ENCODE measurements at regions of chr6 and their contacts with region 1.

Region 1: GRCh38 chr6:150600301-150601017 is 774 bp downstream of the PLEKHG1 start:
- DNase-seq: peak; percentile 92
- H3K4me3 ChIP-seq: peak overlapping the region; percentile 78
- H3K27ac ChIP-seq: peak overlapping the region; percentile 69
- H3K4me1 ChIP-seq: peaks cover 44% of the 10 kb centered on the region
- CTCF ChIP-seq: peak; percentile 74

Region 2: DNA sequence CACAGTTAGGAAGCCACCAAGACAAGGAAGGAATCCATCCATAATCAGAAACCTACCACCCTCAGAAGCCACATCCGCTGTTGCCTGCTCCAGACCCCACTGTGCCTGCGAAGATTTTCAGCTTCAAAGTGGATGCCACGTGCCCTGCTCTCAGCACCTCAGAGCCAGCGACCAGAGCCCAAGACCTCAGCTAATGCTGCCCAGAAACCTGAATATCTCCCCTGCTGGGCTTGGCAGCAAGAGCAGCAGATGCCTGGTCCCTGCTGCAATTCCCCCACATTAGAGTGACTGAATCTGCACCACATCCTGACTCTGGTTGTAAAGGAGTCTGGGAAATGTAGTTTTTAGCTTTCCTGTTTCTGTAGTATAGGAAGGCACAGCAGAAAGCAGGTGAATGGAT is 520.9 kb before region 1 on chr6:
- CTCF ChIA-PET with region 1: no interaction called
- POLR2A ChIA-PET with region 1: no interaction called
- intact Hi-C with region 1: loop called (anchors 10 kb)
- DNase-seq: peak; percentile 24
- H3K4me3 ChIP-seq: no peak overlapping the region
- H3K27ac ChIP-seq: no peak overlapping the region
- H3K4me1 ChIP-seq: no peaks in the 10 kb centered on the region
- CTCF ChIP-seq: no peak

Region 3: GRCh38 chr6:150560004-150560883 is 40.2 kb before region 1 on chr6:
- CTCF ChIA-PET with region 1: no interaction called
- POLR2A ChIA-PET with region 1: no interaction called
- intact Hi-C with region 1: loop called (anchors 2 kb)
- DNase-seq: no peak
- H3K4me3 ChIP-seq: no peak overlapping the region
- H3K27ac ChIP-seq: no peak overlapping the region
- H3K4me1 ChIP-seq: no peaks in the 10 kb centered on the region
- CTCF ChIP-seq: no peak

Region 4: DNA sequence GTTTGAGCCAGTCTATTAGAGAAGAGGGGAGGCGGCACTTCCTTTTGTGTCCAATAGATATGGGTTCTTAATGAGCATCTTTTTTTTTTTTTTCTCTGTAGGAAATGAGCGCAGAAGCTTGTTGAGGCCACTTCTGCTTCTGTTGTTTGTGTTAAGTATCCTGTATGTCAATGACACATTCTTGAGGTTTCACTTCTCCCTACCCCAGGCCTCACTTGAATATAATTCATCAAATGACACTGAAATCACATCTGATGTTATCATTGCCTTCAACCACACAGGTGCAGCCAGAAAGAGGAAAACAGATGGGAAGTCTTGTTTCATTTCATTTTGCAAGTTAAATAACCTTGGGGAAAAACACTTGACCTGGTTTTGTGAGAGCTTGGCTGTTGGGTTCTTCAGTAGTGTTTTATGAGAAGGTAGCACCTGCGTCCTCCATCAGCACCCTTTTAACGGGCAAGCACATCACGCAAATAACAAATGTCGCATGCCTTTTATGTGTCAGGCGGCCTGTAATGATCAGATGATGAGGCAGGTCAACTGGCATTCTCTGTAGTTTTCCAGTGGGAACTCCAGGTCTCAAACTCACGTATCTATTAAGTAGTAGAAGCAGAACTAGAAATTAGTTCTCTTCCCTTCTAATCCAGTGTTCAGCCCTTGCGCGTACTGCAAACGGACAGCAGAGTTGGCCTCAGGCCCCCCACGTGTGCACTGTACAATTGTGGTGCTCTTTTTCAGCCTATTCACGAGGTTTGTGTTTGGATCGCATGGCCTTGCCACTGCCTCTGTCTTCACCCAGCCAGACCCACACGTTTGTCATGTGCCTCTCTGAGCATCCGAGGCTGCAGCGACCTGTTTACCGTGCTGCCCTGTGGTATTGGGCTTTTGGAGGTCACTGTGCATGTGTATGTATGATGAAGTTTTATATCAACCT is 22.7 kb after region 1 on chr6:
- CTCF ChIA-PET with region 1: interaction called, 4 read pairs
- POLR2A ChIA-PET with region 1: interaction called, 18 read pairs
- intact Hi-C with region 1: loop called (anchors 1 kb)
- DNase-seq: peak; percentile 99
- H3K4me3 ChIP-seq: peak overlapping the region; percentile 57
- H3K27ac ChIP-seq: peak overlapping the region; percentile 99
- H3K4me1 ChIP-seq: peaks cover 94% of the 10 kb centered on the region
- CTCF ChIP-seq: no peak

Region 5: GRCh38 chr6:150685860-150686259 is 85.4 kb after region 1 on chr6:
- CTCF ChIA-PET with region 1: interaction called, 5 read pairs
- POLR2A ChIA-PET with region 1: interaction called, 3 read pairs
- intact Hi-C with region 1: loop called (anchors 1 kb)
- DNase-seq: peak; percentile 80
- H3K4me3 ChIP-seq: no peak overlapping the region
- H3K27ac ChIP-seq: no peak overlapping the region
- H3K4me1 ChIP-seq: peaks cover 66% of the 10 kb centered on the region
- CTCF ChIP-seq: peak; percentile 99

Region 6: GRCh38 chr6:150767571-150768018 is 167.1 kb after region 1 on chr6:
- CTCF ChIA-PET with region 1: no interaction called
- POLR2A ChIA-PET with region 1: interaction called, 5 read pairs
- intact Hi-C with region 1: loop called (anchors 2 kb)
- DNase-seq: no peak
- H3K4me3 ChIP-seq: no peak overlapping the region
- H3K27ac ChIP-seq: no peak overlapping the region
- H3K4me1 ChIP-seq: peaks cover 45% of the 10 kb centered on the region
- CTCF ChIP-seq: no peak

Region 7: GRCh38 chr6:150797949-150798348 is 197.5 kb after region 1 on chr6:
- CTCF ChIA-PET with region 1: no interaction called
- POLR2A ChIA-PET with region 1: no interaction called
- intact Hi-C with region 1: no loop called
- DNase-seq: no peak
- H3K4me3 ChIP-seq: no peak overlapping the region
- H3K27ac ChIP-seq: no peak overlapping the region
- H3K4me1 ChIP-seq: no peaks in the 10 kb centered on the region
- CTCF ChIP-seq: no peak

Region 8: DNA sequence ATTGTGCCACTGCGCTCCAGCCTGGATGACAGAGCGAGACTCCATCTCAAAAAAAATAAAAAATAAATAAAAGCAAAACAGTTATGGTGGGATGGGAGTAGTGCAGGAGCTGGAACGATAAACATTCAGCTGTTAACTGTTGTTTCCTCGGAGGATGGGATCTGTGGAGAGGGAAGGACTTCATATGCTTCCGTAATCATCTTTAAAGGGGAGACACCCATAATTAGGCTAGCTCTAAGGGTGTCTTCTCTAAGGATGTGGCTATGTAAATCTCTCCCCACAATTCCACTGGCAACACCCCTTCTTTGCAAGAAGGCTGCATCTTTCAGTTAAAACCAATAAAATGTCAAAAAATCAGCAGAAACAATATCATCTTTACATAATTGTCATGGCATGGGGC is 222.5 kb after region 1 on chr6:
- CTCF ChIA-PET with region 1: interaction called, 11 read pairs
- POLR2A ChIA-PET with region 1: interaction called, 3 read pairs
- intact Hi-C with region 1: no loop called
- DNase-seq: no peak
- H3K4me3 ChIP-seq: no peak overlapping the region
- H3K27ac ChIP-seq: no peak overlapping the region
- H3K4me1 ChIP-seq: no peaks in the 10 kb centered on the region
- CTCF ChIP-seq: no peak

Measured in OCI-LY7 (cell line).